Mucosa of descending colon (tissue), 3 donors: ENCODE measurements at regions of chr18 and their contacts with region 1.

Region 1: GRCh38 chr18:9943311-9943710 is 29.5 kb downstream of the VAPA start:
- DNase-seq: no peak
- ATAC-seq: no peak
- H3K4me3 ChIP-seq: no peak overlapping the region
- H3K4me1 ChIP-seq: no peaks in the 10 kb centered on the region
- CTCF ChIP-seq: no peak

Region 2: GRCh38 chr18:9771261-9771976 is 171.9 kb before region 1 on chr18:
- intact Hi-C with region 1: loop called in 1 of 2 experiments (anchors 10 kb)
- DNase-seq: peak; percentile 78 to 88 (median 88)
- ATAC-seq: peak; percentile 98
- H3K4me3 ChIP-seq: no peak overlapping the region
- H3K4me1 ChIP-seq: no peaks in the 10 kb centered on the region
- CTCF ChIP-seq: peak; percentile 98

Region 3: GRCh38 chr18:10015941-10016819 is 72.9 kb after region 1 on chr18:
- intact Hi-C with region 1: no loop called
- DNase-seq: no peak
- ATAC-seq: peak; percentile 38
- H3K4me3 ChIP-seq: no peak overlapping the region
- H3K4me1 ChIP-seq: no peaks in the 10 kb centered on the region
- CTCF ChIP-seq: no peak